ENCODE measurements at regions of chr10 and their contacts with region 1.

Region 1: GRCh38 chr10:101042667-101043355 is 11.8 kb downstream of the SFXN3 start:
- DNase-seq: peak; percentile 99
- ATAC-seq: peak; percentile 86
- H3K4me3 Mint-ChIP-seq: peak overlapping the region; percentile 94
- H3K27ac Mint-ChIP-seq: peak overlapping the region; percentile 92
- H3K4me1 Mint-ChIP-seq: peaks cover 33% of the 10 kb centered on the region
- H3K27me3 Mint-ChIP-seq: peaks cover 59% of the 10 kb centered on the region
- CTCF ChIP-seq: no peak

Region 2: DNA sequence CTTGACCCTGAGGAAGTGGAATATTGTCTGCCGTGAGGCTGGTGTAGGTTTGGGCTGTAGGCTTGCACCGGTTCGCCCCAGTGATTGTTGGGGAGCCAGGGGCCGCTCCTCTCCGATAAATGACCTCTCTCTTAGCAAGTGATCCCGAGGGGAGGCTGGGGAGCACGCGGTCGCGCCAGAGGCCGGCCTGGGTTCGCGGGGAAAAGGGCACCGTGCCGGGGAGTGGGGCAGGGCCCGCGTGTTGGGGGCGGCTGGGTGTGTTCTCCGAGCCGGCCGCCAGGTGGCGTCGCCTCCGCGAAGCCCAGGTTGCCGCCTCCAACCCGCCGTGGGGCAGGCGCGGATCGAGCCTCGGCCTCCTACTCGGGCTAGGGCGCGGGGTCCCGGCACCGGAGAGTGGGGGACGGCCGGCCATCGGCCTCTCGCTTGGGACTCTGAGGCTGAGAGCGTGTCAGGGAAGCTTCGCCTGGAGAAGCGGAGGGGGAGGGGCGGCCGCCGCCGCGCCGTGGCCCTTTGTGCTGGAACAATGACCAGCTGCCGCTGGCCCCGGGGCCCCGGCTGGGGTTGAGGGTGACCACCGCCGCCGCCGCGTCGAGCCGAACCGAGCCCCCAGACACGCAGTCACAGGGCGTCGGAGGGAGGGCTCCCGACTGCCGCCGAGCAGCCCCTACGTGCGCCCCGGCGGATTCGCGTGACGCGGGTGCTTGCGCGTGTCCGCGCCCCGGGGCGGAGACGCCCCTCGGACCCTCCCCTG is 43.6 kb before region 1 on chr10:
- CTCF ChIA-PET with region 1: interaction called, 19 read pairs
- POLR2A ChIA-PET with region 1: interaction called, 4 read pairs
- DNase-seq: peak; percentile 73
- ATAC-seq: peak; percentile 4
- H3K4me3 Mint-ChIP-seq: peak overlapping the region; percentile 83
- H3K27ac Mint-ChIP-seq: peak overlapping the region; percentile 95
- H3K4me1 Mint-ChIP-seq: peaks cover 32% of the 10 kb centered on the region
- H3K27me3 Mint-ChIP-seq: no peaks in the 10 kb centered on the region
- CTCF ChIP-seq: peak; percentile 97

Region 3: DNA sequence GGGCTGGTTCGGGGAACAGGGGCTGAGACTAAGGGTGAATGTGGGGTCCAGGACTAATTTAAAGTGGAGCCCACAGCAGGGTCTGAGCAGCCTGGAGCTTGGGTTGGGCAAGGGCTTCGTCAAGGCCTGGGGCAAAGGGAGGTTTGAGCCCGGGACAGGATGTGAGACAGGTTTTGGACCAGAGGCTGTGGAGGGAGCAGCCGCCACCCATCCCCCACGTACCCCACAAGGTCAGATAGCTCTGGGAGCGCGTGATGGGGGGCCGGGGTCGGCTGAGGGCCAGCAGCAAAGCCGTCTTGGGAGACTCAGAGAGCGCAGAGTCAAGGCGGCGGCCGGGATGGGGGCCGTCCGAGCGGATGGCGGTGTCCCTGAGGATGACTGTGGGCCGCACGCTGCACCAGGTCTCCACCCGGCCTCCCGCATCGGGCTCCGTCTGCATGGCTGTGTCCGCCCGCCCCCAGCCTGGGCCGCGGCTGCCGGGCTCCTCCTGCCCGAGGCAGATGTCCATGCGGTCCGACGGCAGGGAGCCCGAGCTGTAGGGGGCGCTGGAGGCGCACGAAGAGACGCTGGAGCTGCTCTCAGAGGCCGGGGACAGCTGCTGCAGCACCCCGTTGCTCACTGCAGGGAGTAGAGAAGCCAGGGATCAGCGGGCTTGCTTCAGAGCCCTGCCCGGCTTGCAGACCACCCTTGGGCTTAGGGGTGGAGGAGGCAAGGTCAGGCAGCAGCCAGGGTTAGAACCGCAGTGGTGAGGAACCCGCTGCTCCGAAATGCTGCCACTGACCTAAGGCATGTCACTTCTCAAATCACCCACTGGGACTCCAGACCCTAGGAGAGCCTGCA is 24.0 kb before region 1 on chr10:
- CTCF ChIA-PET with region 1: interaction called, 83 read pairs
- POLR2A ChIA-PET with region 1: interaction called, 3 read pairs
- DNase-seq: peak; percentile 95
- ATAC-seq: peak; percentile 77
- H3K4me3 Mint-ChIP-seq: peak overlapping the region; percentile 73
- H3K27ac Mint-ChIP-seq: no peak overlapping the region
- H3K4me1 Mint-ChIP-seq: peaks cover 15% of the 10 kb centered on the region
- H3K27me3 Mint-ChIP-seq: peaks cover 64% of the 10 kb centered on the region
- CTCF ChIP-seq: peak; percentile 70

Region 4: DNA sequence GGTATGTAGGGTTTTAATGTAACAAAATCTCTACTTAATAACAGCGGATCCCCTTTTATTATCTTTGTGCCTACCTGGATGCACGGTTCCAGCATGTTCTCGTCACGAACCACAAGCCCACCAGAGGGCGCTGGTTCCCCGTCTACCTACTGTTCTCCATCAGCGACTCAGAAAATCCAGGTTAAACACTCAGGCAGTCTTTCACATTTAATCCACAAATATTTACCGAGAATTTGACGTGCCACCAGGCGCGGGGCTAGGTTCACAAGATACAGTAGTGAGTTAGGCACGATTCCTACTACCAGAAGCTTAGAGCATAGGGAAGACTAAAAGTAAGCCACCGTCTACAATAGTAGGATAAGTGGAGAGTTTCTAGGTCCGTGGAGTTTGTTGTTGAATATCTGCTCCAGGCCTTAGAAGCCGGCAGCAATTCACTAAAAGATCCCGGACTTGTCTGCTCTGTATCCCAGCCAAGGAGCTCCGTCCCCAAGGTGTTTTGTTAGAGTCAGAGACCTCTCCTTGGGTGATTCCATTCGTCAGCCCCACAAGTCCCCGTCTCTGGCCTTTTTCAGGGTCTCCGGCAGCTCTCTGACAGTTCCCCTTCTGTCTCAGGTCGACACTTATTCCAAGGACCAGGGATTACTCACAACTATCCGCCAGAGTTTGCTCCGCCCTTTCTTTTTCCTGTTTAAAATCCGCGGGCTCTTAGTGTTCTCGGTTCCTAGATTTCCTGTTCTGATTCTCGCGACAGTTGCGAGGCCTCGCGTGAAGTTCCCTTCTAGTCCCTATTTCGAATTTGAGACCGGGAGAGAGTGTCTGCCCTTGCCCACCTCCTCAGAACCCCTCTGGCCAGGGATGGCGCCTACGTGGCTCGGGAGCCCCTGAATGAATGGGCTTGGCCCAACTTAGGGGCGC is 17.5 kb after region 1 on chr10:
- CTCF ChIA-PET with region 1: interaction called, 405 read pairs
- POLR2A ChIA-PET with region 1: interaction called, 8 read pairs
- DNase-seq: peak; percentile 90
- ATAC-seq: peak; percentile 43
- H3K4me3 Mint-ChIP-seq: peak overlapping the region; percentile 97
- H3K27ac Mint-ChIP-seq: peak overlapping the region; percentile 98
- H3K4me1 Mint-ChIP-seq: peaks cover 38% of the 10 kb centered on the region
- H3K27me3 Mint-ChIP-seq: peaks cover 38% of the 10 kb centered on the region
- CTCF ChIP-seq: peak; percentile 84

Region 5: DNA sequence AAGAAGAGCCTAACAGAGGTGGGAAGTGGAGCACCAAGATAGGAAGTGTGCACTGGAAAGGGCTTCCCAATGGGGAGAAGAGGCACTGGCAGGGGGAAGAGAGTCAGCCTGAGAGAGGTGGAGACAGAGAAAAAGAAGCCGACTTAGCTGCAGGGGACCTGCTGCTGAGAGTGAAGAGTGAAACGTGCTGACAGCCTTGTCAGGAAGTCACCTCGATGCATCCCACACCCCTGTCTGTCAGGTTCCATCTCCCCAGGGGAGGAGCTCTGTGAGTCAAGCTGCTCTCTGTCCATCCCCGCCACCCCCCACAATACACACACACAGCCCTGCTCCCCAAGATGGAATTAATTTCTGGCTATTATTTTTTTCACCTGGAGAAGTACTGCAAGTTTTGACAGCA is 33.0 kb after region 1 on chr10:
- CTCF ChIA-PET with region 1: interaction called, 405 read pairs
- POLR2A ChIA-PET with region 1: interaction called, 9 read pairs
- DNase-seq: no peak
- ATAC-seq: no peak
- H3K4me3 Mint-ChIP-seq: no peak overlapping the region
- H3K27ac Mint-ChIP-seq: no peak overlapping the region
- H3K4me1 Mint-ChIP-seq: peaks cover 41% of the 10 kb centered on the region
- H3K27me3 Mint-ChIP-seq: peaks cover 79% of the 10 kb centered on the region
- CTCF ChIP-seq: no peak

Region 6: DNA sequence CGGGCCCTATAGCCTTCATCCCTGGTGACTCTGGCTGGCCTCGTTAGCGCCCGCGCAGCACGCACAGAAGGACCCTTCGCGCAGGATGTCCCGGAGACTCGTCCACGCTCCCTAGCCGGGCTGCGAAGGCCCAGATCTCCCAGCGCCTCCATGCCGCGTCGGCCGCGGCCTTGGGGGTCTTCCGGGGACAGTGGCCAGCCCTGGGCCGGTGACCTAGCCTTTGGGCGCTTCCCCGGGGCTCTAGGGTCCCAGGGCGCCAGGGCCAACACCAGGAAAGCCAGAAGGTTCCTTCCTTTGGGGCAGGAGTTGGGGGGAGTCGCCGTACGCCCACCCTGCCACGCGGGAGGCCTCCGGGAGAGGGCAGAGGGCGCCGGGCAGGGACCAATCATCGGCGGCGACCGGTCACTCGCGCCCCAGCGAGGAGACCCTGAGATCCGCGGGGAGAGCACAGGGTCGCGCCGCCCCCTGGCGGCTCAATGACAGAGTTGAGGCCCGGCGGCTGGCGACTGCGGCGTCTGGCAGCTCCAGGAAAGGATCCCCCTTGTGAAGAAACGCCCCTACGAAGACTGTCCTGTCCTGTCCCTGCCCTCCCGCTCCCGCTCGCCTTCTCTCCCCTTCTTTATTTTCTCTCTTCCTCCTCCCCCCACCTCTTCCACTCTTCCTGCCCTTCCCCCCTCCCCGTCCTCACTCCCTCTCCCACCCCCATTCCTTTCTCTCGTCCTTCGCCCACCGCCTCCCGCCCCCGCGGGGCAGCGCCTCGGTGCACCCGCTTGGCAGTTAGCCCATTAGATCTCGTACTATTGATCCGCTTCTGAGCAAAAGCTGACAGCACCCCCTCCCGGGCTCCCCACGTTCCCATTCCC is 248.8 kb after region 1 on chr10:
- CTCF ChIA-PET with region 1: interaction called, 13 read pairs
- POLR2A ChIA-PET with region 1: no interaction called
- DNase-seq: peak; percentile 87
- ATAC-seq: peak; percentile 65
- H3K4me3 Mint-ChIP-seq: peak overlapping the region; percentile 80
- H3K27ac Mint-ChIP-seq: no peak overlapping the region
- H3K4me1 Mint-ChIP-seq: peaks cover 39% of the 10 kb centered on the region
- H3K27me3 Mint-ChIP-seq: peaks cover 97% of the 10 kb centered on the region
- CTCF ChIP-seq: peak; percentile 80

Measured in WTC11 (cell line).